PC-3 (cell line): ENCODE measurements at regions of chr4 and their contacts with region 1.

Region 1: DNA sequence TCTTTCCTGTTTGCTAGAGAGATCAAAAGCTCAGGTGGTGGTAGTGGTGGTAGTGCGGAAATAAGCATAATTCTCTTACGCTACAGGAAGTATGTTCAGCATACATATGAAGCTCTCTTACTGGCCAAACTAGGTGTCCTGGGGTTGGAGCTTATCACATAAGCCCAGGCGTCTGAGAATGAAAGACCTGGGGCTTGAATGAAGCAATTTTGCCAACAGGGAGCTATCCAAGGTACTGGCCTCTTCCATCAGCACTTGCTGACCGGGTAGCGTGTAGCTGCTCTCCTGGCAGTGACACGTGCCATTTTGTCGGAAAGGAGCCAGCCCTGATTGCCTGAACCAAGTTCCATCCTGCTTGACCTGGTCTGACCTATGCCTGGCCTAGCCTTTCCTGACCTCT is 65.9 kb upstream of the HPF1 start:
- DNase-seq: peak; percentile 60
- ATAC-seq: peak; percentile 40
- H3K4me3 ChIP-seq: no peak overlapping the region
- H3K27ac ChIP-seq: no peak overlapping the region
- H3K4me1 ChIP-seq: no peaks in the 10 kb centered on the region
- H3K27me3 ChIP-seq: no peaks in the 10 kb centered on the region
- CTCF ChIP-seq: no peak

Region 2: DNA sequence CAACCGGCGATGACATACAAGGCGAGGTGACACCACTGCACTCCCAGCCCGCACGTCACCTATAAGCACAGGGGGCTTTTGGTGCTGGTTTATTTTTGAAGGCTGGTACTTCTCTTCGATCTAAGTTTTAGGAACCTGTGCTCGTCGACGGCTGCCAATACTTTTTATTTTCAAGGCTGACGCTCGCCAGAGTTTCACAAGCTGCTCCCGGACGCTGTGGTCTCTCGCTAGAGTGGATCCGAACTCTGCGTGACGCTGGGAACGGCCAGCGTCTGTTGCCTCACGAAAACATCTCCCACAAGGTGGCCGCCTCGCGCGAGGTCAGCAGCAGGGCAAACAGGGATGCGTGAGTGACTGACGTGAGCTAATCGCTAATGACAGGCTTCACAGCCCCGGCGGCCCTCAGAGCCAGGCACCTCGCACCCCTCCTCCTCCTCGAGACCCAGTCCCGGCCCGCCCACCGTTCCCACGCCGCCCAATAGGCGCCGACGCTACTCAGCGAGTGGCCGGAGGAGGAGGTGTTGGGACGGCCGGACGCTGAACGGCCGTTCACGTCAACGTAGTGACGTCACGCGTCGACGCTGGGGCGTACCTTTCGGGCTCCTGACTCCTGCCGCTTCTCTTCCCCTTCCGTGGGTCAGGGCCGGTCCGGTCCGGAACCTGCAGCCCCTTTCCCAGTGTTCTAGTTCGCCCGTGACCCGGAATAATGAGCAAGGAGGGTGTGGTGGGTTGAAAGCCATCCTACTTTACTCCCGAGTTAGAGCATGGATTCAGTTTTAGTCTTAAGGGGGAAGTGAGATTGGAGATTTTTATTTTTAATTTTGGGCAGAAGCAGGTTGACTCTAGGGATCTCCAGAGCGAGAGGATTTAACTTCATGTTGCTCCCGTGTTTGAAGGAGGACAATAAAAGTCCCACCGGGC is 203.5 kb before region 1 on chr4 and contains the start of gene CLCN3:
- CTCF ChIA-PET with region 1: no interaction called
- POLR2A ChIA-PET with region 1: no interaction called
- intact Hi-C with region 1: no loop called
- DNase-seq: peak; percentile 98
- ATAC-seq: peak; percentile 92
- H3K4me3 ChIP-seq: peak within 1 kb of the TSS; percentile 92
- H3K27ac ChIP-seq: peak within 1 kb of the TSS; percentile 83
- H3K4me1 ChIP-seq: peaks cover 19% of the 10 kb centered on the region
- H3K27me3 ChIP-seq: no peaks in the 10 kb centered on the region
- CTCF ChIP-seq: no peak
- total RNA-seq, gene CLCN3: 13.2 and 16.9 TPM in 2 replicates

Region 3: GRCh38 chr4:169810325-169811323 is 13.1 kb before region 1 on chr4:
- CTCF ChIA-PET with region 1: no interaction called
- POLR2A ChIA-PET with region 1: no interaction called
- intact Hi-C with region 1: no loop called
- DNase-seq: peak; percentile 81
- ATAC-seq: peak; percentile 57
- H3K4me3 ChIP-seq: no peak overlapping the region
- H3K27ac ChIP-seq: no peak overlapping the region
- H3K4me1 ChIP-seq: no peaks in the 10 kb centered on the region
- H3K27me3 ChIP-seq: no peaks in the 10 kb centered on the region; the same call in 1 of the 2 replicates
- CTCF ChIP-seq: peak; percentile 78

Region 4: DNA sequence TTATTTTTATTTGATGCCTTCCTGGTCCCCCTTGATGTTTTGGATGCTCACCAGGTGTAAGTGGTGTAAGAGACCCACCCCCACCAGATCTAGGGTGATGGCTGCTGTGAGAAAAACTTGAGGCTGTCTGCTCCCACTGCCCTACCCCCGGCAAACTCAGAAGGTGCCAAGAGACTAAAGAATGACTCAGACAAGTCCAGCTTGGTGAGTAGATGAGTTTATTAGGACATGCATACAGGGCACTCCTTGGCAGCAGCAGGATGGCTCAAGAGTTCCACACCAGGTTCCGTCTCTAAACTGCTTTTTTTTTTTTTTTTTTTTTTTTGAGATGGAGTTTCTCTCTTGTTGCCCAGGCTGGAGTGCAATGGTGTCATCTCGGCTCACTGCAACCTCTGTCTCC is 18.1 kb after region 1 on chr4:
- CTCF ChIA-PET with region 1: interaction called, 11 read pairs
- POLR2A ChIA-PET with region 1: no interaction called
- intact Hi-C with region 1: no loop called
- DNase-seq: no peak
- ATAC-seq: no peak
- H3K4me3 ChIP-seq: no peak overlapping the region
- H3K27ac ChIP-seq: no peak overlapping the region
- H3K4me1 ChIP-seq: no peaks in the 10 kb centered on the region
- H3K27me3 ChIP-seq: 0 out of 2 replicates have a peak, but pooled peaks cover 10% of the 10 kb centered on the region
- CTCF ChIP-seq: no peak